Calu3 (cell line): ENCODE measurements at regions of chr11 and their contacts with region 1.

Region 1: GRCh38 chr11:124194698-124195410 is 11.7 kb downstream of the OR10D3 start:
- DNase-seq: peak; percentile 38
- H3K4me3 Mint-ChIP-seq: no peak overlapping the region
- H3K27ac Mint-ChIP-seq: no peak overlapping the region
- H3K4me1 Mint-ChIP-seq: no peaks in the 10 kb centered on the region
- H3K27me3 Mint-ChIP-seq: no peaks in the 10 kb centered on the region
- CTCF ChIP-seq: peak; percentile 50

Region 2: GRCh38 chr11:122258446-122259194 is 1936.2 kb before region 1 on chr11:
- CTCF ChIA-PET with region 1: no interaction called
- intact Hi-C with region 1: no loop called
- DNase-seq: no peak
- H3K4me3 Mint-ChIP-seq: no peak overlapping the region
- H3K27ac Mint-ChIP-seq: no peak overlapping the region
- H3K4me1 Mint-ChIP-seq: no peaks in the 10 kb centered on the region
- H3K27me3 Mint-ChIP-seq: peaks cover 65% of the 10 kb centered on the region
- CTCF ChIP-seq: no peak

Region 3: DNA sequence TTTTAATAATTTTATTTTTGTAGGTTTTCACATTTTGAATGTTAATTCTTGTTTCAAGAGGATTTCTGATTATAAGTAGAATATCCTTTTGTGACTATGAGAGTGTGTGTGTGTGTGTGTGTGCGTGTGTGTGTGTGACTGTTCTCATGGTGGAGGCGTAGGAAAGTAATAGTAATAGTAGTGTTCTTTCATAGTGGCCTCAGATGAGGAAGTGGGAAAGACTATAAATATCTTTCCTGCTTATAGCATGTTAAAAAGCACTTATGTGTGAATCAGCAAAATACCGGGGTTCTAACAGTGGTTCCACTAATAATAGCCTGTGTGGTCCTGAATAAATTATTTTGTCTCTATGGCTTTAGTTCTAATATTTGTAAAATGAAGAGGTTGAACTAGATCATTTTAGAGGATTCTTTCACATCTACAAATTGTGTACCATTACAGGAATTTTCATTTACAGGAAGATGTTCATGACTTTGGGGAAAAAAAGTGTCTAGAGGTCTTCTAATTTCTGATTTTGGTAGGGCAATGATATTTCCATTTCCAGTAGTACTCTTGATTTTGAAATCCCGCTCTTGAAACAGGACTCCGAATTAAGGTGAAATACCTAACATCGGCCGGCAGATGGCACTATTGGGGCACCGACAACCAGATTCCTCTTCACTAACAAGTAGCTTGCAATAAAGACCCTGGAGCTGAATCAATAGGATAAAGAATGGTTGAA is 123.8 kb before region 1 on chr11:
- CTCF ChIA-PET with region 1: interaction called, 13 read pairs
- intact Hi-C with region 1: loop called (anchors 1 kb)
- DNase-seq: peak; percentile 54
- H3K4me3 Mint-ChIP-seq: no peak overlapping the region
- H3K27ac Mint-ChIP-seq: no peak overlapping the region
- H3K4me1 Mint-ChIP-seq: no peaks in the 10 kb centered on the region
- H3K27me3 Mint-ChIP-seq: peaks cover 30% of the 10 kb centered on the region
- CTCF ChIP-seq: no peak

Region 4: DNA sequence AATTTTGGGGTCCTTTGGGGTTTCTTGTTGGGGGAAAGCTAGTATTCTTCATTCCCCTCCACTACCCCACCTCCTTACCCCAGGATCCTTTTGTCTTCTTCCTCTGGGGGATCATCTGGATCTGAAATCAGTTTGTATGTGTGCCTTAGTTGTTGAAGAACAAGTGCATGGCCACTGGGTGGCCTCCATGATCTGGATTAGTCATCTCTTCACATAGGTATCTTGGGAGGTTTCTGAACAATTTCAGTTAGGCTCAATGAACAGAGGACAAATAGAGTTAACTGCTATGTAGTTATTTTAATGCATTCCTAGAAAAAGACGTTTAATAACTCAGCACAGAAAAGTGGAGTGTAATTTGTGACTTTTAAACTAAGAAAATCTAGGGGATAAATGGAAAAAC is 86.7 kb before region 1 on chr11:
- CTCF ChIA-PET with region 1: no interaction called
- intact Hi-C with region 1: loop called (anchors 10 kb)
- DNase-seq: peak; percentile 2
- H3K4me3 Mint-ChIP-seq: no peak overlapping the region
- H3K27ac Mint-ChIP-seq: no peak overlapping the region
- H3K4me1 Mint-ChIP-seq: no peaks in the 10 kb centered on the region
- H3K27me3 Mint-ChIP-seq: no peaks in the 10 kb centered on the region
- CTCF ChIP-seq: no peak